ENCODE measurements at regions of chr12 and their contacts with region 1.

Region 1: DNA sequence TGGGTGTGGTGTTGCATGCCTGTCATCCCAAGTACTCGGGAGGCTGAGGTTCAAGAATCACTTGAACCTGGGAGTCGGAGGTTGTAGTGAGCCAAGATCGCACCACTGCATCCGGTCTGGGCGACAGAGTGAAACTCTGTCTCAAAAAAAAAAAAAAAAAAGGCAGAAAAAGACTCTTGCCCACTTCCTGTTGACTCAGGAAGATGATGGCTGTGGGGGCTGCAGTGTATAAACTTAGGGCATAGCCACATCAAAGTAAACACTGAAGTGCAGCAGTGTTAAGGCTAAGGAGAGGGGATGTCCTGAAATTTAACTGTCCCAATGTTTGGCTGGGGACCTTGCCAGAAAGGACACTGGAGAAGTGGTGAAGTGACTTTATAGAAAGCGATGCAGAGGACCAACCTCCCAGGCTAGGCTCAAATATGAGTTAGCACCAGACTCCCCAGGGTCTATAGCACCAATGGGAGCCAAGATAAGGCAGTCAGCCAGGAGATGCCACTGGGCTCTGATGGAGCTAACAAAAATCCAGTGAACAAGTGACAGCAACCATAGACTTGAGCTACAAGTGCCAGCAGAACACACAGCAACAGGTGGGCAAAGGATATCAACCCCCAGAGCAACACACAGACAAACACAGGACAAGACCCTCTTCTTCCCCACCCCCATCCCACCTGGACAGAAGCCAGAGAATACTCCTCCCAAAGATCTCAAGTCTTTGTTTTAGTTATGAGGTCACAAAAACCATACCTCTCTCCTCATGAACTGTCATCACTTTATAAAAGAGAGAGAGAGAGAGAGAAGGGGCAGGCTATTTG is 28.0 kb downstream of the NELL2 start:
- DNase-seq: peak; percentile 79
- H3K4me3 Mint-ChIP-seq: peak overlapping the region; percentile 55
- H3K27ac Mint-ChIP-seq: peak overlapping the region; percentile 94
- H3K4me1 Mint-ChIP-seq: peaks cover 72% of the 10 kb centered on the region
- H3K27me3 Mint-ChIP-seq: no peaks in the 10 kb centered on the region

Region 2: GRCh38 chr12:43578782-43579181 is 1269.3 kb before region 1 on chr12:
- CTCF ChIA-PET with region 1: no interaction called
- intact Hi-C with region 1: no loop called
- DNase-seq: no peak
- H3K4me3 Mint-ChIP-seq: no peak overlapping the region
- H3K27ac Mint-ChIP-seq: no peak overlapping the region
- H3K4me1 Mint-ChIP-seq: no peaks in the 10 kb centered on the region
- H3K27me3 Mint-ChIP-seq: peaks cover 2% of the 10 kb centered on the region

Region 3: DNA sequence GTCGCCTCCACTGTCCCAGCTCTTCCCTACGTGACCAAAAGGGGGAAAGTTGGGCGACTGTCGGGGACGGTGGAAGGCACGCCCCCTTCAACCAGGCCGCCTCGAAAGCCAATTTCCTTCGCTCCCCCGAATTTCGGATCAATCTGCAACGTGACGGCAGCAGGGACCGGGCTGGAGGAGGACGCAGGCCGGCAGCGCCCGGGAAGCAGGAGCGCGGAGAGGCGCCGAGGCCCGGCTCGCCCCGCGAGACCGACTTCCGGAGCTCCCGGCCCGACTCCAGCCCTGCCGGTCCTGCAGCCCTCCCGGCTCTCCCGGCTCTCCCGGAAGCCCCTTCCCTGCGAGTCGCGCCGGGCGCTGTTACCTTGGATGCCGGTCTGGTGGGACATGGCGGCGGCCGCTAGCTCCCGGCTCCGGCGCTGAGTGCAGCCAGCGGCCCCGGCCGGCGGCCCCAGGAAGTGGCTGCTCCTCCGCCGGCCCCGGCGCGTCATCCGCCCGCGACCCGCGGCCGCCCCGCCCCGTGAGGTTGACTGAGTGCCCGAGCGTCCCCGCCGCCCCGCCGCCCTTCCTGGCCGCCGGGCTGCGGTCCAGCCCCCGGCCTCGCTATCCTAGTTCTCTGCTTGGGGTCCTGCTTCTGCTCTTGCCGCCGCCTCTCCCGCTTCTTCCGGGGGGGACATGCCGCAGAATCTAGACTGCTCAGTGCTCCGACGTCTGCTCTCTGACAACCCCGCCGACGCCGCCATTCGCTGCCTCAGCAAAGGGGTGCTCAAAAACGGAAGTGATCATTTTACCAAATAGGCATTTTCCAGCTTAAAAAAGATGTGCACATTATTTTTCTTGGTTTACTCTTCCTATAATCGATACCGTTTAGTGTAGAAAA is 1042.0 kb before region 1 on chr12 and contains the start of gene TWF1:
- CTCF ChIA-PET with region 1: no interaction called
- intact Hi-C with region 1: loop called (anchors 10 kb)
- DNase-seq: peak; percentile 88
- H3K4me3 Mint-ChIP-seq: peak within 1 kb of the TSS; percentile 98
- H3K27ac Mint-ChIP-seq: peak within 1 kb of the TSS; percentile 100
- H3K4me1 Mint-ChIP-seq: peaks cover 39% of the 10 kb centered on the region
- H3K27me3 Mint-ChIP-seq: no peaks in the 10 kb centered on the region
- total RNA-seq, gene TWF1: 12.9 to 15.3 TPM

Region 4: DNA sequence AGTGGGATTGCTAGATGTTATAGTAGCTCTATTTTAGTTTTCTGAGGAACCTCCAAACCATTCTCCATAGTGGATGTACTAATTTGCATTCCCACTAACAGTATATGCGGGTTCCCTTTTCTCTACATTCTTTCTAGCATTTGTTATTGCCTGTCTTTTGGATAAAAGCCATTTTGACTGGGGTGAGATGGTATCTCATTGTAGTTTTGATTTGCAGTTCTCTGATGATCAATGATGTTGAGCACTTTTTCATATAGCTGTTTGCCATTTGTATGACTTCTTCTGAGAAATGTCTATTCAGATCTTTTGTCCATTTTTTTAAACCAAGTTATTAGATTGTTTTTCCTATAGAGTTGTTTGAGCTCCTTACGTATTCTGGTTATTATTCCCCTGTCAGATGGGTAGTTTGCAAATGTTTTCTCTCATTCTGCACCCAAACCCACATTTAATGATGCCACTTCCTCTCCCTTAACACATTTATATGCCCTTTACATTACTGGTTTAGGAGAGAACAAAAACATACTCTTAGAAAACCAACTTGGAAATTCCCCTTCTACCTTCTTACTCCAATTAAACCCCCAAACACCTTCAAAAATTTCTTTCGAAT is 20.2 kb before region 1 on chr12:
- CTCF ChIA-PET with region 1: interaction called, 6 read pairs
- intact Hi-C with region 1: loop called (anchors 1 kb)
- DNase-seq: no peak
- H3K4me3 Mint-ChIP-seq: peak overlapping the region; percentile 58
- H3K27ac Mint-ChIP-seq: peak overlapping the region; percentile 89
- H3K4me1 Mint-ChIP-seq: peaks cover 64% of the 10 kb centered on the region
- H3K27me3 Mint-ChIP-seq: no peaks in the 10 kb centered on the region

Region 5: GRCh38 chr12:44859998-44860689 is 12.0 kb after region 1 on chr12:
- CTCF ChIA-PET with region 1: interaction called, 4 read pairs
- intact Hi-C with region 1: loop called (anchors 1 kb)
- DNase-seq: no peak
- H3K4me3 Mint-ChIP-seq: peak overlapping the region; percentile 0
- H3K27ac Mint-ChIP-seq: peak overlapping the region; percentile 88
- H3K4me1 Mint-ChIP-seq: peaks cover 77% of the 10 kb centered on the region
- H3K27me3 Mint-ChIP-seq: no peaks in the 10 kb centered on the region

Region 6: DNA sequence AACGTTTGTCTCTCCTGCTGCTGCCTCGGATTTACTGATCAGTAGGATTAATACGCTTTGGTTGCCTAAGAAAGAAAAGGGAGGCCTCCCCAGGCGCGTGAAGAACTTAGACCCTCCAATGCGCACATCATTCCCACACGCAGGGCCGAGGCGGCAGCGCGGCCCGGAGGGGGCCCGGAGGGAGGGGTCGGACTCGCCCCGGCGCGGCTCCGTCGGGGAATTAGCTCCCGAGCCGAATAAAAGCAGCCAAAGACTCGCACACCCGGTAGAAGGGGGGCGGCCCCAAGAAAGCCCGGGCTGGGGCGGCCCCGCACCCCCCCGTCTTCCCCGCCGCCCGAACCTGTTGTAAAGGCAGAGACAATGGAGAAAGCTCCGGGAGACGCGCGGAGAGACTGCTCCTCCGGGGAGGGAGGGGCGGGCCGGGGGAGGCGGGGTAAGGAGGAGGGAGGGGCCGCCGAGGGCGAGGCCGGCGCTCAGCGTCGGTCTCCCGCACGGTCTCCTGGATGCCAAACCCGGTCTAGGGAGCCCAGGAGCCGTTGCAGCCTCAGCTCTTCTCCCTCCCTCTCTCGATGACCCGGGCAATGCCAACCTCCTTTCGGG is 28.0 kb after region 1 on chr12 and contains the start of gene NELL2:
- CTCF ChIA-PET with region 1: interaction called, 6 read pairs
- intact Hi-C with region 1: loop called (anchors 1 kb)
- DNase-seq: peak; percentile 82
- H3K4me3 Mint-ChIP-seq: peak within 1 kb of the TSS; percentile 99
- H3K27ac Mint-ChIP-seq: peak within 1 kb of the TSS; percentile 91
- H3K4me1 Mint-ChIP-seq: peaks cover 23% of the 10 kb centered on the region
- H3K27me3 Mint-ChIP-seq: peaks cover 6% of the 10 kb centered on the region
- total RNA-seq, gene NELL2: 61.9 to 72.2 TPM

Measured in activated naive CD4-positive, alpha-beta T cell treated with anti-CD3 and anti-CD28 coated beads for 36 hours (primary cell).